Activated CD8-positive, alpha-beta T cell treated with anti-CD3 and anti-CD28 coated beads for 36 hours (primary cell): ENCODE measurements at regions of chr6 and their contacts with region 1.

Region 1: DNA sequence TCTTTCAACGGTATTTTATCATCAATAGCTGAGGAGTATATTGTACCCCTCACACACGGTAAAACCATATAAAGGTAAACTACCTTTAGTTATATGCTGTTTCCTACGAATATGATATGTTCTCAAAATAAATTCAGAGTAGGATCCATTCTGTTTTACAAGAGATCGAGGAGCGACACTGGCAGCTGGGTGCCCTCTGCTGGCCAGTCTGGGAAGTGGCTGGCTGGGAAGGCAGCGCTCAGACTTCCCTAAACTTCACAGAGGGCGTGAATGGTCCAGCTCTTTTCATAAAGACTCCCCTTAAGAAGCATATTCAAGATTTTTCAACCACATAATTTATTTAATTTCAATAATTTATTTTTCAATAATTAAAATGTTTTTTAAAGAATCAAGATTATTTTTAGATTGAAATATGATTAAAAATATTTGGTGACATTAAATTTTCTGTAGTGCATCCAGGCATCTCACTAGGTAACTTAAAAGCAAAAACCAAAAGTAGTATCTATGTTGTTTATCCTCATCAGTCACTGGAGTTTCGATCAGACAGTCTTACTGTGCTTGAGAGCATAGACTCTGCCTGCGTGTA is 187.5 kb upstream of the PDE10A start:
- DNase-seq: peak; percentile 71
- ATAC-seq: peak; percentile 64
- H3K4me3 Mint-ChIP-seq: no peak overlapping the region
- H3K27ac Mint-ChIP-seq: no peak overlapping the region
- H3K4me1 Mint-ChIP-seq: peaks cover 10% of the 10 kb centered on the region
- H3K27me3 Mint-ChIP-seq: peaks cover 63% of the 10 kb centered on the region
- CTCF ChIP-seq: peak; percentile 89

Region 2: GRCh38 chr6:165439928-165440554 is 410.5 kb before region 1 on chr6:
- CTCF ChIA-PET with region 1: interaction called, 13 read pairs
- POLR2A ChIA-PET with region 1: no interaction called
- intact Hi-C with region 1: loop called (anchors 2 kb)
- DNase-seq: no peak
- ATAC-seq: no peak
- H3K4me3 Mint-ChIP-seq: no peak overlapping the region
- H3K27ac Mint-ChIP-seq: no peak overlapping the region
- H3K4me1 Mint-ChIP-seq: no peaks in the 10 kb centered on the region
- H3K27me3 Mint-ChIP-seq: no peaks in the 10 kb centered on the region
- CTCF ChIP-seq: peak; percentile 42

Region 3: DNA sequence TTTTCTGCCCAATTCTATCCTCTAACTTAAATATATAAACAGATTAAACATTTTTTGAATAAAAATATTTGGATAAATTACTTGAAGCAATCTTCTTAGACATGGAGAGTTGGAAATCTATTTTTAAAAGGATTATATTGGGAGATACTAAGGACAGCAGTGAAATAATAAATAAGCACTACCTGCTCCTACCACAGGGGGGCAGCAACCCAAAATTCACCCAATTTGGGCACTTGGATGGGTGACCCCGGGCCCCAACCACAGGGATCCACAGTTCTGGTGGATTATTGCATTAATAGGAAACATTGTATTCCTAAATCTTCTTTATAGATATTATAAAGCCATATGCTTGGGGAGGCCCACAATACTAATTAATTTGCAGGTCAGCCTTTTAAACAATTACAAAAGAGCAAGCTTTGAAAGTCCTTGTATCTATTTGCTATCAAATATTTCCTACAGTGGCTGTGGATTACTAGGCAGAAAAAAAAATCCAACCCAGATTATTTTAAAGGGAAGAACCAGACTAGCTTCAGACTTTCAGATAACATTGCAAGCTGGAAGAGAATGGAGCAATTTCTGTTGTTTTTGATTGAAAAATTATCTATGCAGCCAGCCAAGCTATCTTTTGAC is 121.1 kb before region 1 on chr6:
- CTCF ChIA-PET with region 1: interaction called, 12 read pairs
- POLR2A ChIA-PET with region 1: no interaction called
- intact Hi-C with region 1: loop called (anchors 2 kb)
- DNase-seq: peak; percentile 46
- ATAC-seq: no peak
- H3K4me3 Mint-ChIP-seq: no peak overlapping the region
- H3K27ac Mint-ChIP-seq: no peak overlapping the region
- H3K4me1 Mint-ChIP-seq: no peaks in the 10 kb centered on the region
- H3K27me3 Mint-ChIP-seq: peaks cover 3% of the 10 kb centered on the region
- CTCF ChIP-seq: peak; percentile 81